ENCODE measurements at regions of chr20 and their contacts with region 1.

Region 1: GRCh38 chr20:32091888-32092346 is 17.6 kb upstream of the TM9SF4 start:
- H3K4me3 ChIP-seq: no peak overlapping the region
- H3K27ac ChIP-seq: no peak overlapping the region
- H3K4me1 ChIP-seq: no peaks in the 10 kb centered on the region
- CTCF ChIP-seq: peak; percentile 89

Region 2: DNA sequence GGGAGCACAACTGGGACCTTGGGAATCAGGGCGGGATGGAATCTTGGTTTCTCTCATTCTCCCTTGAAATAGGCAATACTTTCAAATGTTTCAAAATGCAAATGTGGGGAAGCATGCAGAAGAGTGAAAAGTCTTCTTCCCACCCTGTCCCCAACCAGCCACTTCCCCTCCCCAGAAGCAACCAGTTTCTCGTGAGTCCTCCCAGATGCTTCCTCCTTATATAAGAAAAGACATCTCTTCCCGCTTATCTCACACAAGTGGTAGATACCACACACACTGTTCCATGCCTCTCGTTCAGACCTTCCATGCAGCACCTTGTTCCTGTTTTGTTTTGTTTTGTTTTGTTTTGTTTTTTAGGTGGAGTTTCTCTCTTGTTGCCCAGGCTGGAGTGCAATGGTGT is 14.7 kb before region 1 on chr20:
- CTCF ChIA-PET with region 1: interaction called, 18 read pairs
- POLR2A ChIA-PET with region 1: no interaction called
- H3K4me3 ChIP-seq: no peak overlapping the region
- H3K27ac ChIP-seq: no peak overlapping the region
- H3K4me1 ChIP-seq: no peaks in the 10 kb centered on the region
- CTCF ChIP-seq: no peak

Region 3: GRCh38 chr20:32109392-32110172 is 17.7 kb after region 1 on chr20 and contains the start of gene TM9SF4:
- CTCF ChIA-PET with region 1: interaction called, 18 read pairs
- POLR2A ChIA-PET with region 1: no interaction called
- H3K4me3 ChIP-seq: peak within 1 kb of the TSS; percentile 87
- H3K27ac ChIP-seq: peak within 1 kb of the TSS; percentile 95
- H3K4me1 ChIP-seq: 0 out of 2 replicates have a peak, but pooled peaks cover 3% of the 10 kb centered on the region
- CTCF ChIP-seq: no peak